OCI-LY7 (cell line): ENCODE measurements at regions of chr16 and their contacts with region 1.

Region 1: DNA sequence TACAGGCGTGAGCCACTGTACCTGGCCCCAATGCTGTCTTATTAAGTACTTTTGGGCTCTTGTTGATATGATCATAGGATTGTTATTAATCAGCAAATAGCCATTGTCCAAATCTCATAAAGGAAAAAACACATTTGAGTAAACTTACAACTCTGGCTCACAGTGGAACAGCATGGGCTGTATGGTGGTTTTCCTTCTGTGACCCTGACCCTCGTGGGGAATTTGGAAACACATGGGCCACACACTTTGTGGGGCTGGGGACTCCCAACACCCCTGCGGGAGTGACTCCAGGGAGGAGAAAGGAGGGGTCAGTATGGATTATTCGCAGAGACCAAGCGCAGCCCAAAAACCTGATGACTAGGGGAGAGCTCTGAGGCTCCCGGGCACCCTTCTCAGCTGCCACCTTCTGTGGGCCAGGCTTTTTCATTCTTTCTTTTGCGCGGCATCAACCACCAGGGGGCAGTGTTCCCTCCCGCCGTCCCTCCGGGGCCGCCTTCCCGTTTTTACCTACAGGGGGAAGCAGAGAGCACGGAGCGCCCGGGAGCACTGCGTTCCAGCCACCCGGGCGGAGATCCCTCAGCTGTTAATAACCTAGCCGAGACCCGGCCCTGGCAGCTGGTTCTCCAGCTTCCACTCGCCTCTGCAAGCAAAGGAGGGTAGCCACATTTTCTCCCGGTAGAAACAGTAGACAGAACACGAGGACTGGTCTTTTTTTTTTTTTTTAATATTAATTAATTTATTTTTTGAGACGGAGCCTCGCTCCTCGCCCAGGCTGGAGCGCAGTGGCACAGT is 9.7 kb downstream of the TSNAXIP1 start:
- DNase-seq: peak; percentile 87
- H3K4me3 ChIP-seq: no peak overlapping the region
- H3K27ac ChIP-seq: no peak overlapping the region
- H3K4me1 ChIP-seq: no peaks in the 10 kb centered on the region
- CTCF ChIP-seq: peak; percentile 100

Region 2: DNA sequence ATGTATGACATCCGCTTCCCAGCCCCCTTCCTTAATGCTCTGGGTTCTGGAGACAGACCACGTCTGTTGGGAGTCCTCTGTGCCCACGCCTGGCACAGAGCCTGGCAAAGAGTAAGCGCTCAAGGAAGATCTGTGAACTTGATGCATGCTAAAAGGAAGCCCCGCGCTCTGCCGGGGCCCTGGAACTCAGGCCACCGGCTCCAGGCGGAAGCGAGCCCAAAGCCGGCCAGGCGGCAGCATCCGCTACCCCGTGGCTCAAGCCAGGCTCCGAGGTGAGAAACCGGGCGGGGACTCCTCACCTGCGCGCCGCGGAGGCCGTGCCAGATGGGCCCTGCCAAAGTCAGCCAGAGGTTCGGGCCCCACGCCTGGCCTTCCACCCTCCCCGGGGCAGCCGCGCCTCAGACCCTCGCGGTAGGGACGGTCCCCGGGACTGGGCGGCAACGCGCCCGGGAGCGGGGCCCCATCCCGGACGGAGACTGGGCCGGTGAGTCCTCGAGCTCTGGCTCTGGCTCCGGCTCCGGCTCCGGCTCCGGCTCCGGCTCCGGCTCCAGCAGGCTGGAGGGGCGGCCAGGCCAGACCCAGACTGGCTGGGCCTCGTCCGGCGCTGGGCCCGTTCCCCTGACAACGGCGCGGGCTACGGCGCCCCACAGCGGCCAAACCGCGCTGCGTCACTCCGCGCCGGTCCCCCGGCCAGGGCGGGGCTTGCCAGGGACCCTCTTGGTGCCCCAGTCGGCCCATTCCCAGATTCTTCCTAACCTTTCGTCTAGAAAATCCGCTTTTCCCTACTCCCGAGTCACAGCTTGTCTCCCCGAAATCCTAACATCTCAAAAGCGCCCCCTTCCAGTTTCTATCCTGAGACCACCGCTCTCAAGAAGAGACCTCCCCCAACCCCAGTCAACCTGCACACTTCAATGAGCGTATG is 400.3 kb before region 1 on chr16 and contains the start of gene ZDHHC1:
- CTCF ChIA-PET with region 1: no interaction called
- POLR2A ChIA-PET with region 1: no interaction called
- intact Hi-C with region 1: no loop called
- DNase-seq: peak; percentile 14
- H3K4me3 ChIP-seq: peak within 1 kb of the TSS; percentile 21
- H3K27ac ChIP-seq: no peak within 1 kb of the TSS
- H3K4me1 ChIP-seq: no peaks in the 10 kb centered on the region
- CTCF ChIP-seq: peak; percentile 71
- total RNA-seq, gene ZDHHC1: not detected in 2 replicates

Region 3: DNA sequence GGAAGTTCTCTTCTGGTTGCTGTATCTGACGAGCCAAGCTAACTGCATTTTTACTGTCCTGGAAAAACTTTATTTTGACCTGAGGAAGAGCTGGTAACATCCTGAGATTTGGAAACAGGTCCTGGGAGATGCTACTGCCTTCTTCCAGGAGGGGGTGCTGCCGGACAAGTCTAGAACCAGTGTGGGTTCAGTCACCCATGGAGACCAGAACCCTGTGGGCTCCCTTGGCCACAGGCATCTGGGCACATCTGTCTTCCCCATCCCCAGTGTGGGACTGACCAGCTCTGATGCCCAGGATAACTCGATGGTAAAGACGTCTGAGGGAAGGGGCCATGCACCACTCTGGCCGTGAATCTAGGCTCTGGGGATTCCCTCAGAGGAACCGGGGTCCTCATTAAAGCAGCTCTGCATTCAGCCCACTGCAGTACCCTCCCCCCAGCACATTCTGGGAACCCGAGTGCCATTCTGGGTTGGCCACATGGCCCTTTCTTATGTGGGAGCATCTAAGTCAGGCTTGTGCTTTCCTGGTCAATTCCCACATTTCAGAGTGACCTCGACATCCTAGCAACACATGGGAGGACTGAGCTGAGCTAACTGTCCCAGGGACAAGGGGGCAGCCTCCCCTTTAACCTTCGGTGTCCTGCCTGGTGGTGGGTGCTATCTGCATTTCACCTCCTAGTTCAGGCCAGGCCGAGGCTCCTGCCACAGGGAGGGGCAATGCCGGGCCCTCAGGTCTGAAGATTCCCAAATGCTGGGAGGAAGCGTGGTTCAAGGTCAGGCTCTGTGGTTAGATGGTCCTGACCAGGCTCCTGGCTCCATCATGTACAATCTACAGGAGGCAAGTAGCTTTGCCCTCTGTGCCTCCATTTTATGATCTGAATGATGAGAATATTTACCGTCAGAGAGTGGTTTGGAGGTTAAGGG is 143.4 kb before region 1 on chr16:
- CTCF ChIA-PET with region 1: no interaction called
- POLR2A ChIA-PET with region 1: interaction called, 3 read pairs
- intact Hi-C with region 1: loop called (anchors 1 kb)
- DNase-seq: peak; percentile 80
- H3K4me3 ChIP-seq: no peak overlapping the region
- H3K27ac ChIP-seq: no peak overlapping the region
- H3K4me1 ChIP-seq: peaks cover 16% of the 10 kb centered on the region
- CTCF ChIP-seq: peak; percentile 94

Region 4: GRCh38 chr16:67833418-67834241 is 17.2 kb after region 1 on chr16:
- CTCF ChIA-PET with region 1: no interaction called
- POLR2A ChIA-PET with region 1: no interaction called
- intact Hi-C with region 1: no loop called
- DNase-seq: peak; percentile 96
- H3K4me3 ChIP-seq: peak overlapping the region; percentile 73
- H3K27ac ChIP-seq: no peak overlapping the region
- H3K4me1 ChIP-seq: peaks cover 10% of the 10 kb centered on the region
- CTCF ChIP-seq: no peak

Region 5: GRCh38 chr16:67865316-67865715 is 48.9 kb after region 1 on chr16:
- CTCF ChIA-PET with region 1: no interaction called
- POLR2A ChIA-PET with region 1: no interaction called
- intact Hi-C with region 1: loop called (anchors 1 kb)
- DNase-seq: peak; percentile 38
- H3K4me3 ChIP-seq: no peak overlapping the region
- H3K27ac ChIP-seq: no peak overlapping the region
- H3K4me1 ChIP-seq: no peaks in the 10 kb centered on the region
- CTCF ChIP-seq: peak; percentile 71